Sigmoid colon (tissue), 7 donors: ENCODE measurements at regions of chr9 and their contacts with region 1.

Region 1: DNA sequence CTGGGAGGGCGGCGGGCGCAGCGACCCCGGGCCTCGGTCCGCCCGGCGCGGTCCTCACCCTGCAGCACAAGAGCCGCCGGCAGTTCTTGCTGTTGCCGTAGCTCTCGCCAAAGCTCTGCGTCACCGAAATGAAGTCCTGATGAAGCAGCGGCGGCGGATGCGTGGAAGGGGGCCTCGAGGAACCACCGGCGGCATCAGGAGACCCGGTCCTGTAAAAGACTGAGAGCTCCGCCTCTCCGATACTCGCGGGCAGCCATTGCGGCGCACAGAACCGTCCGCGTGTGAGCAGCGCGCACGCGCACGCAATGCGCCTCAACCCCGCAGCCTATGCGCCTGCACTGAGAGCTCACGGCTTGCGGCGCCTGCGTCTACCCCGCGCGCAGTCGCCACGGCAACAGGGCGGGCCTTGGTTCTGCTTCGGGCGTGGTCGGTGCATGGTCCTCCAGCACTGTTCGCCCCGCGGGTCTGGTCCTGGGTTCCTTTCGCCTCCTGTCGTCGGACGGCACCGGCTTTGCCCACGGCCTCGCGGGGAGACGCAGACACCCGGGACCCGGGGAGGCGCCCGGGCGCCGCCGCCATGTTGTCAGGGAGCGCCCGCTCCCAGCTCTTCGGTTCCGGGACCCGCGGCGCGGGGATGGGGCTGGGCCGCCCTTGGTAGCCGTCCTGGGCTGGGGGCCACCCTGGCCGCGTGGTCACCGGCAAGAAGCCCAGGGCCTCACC is 9.3 kb upstream of the GRIN1 start:
- DNase-seq: peak; percentile 91
- H3K4me3 ChIP-seq: peak overlapping the region; percentile 44 to 79 (median 64)
- H3K27ac ChIP-seq: peak overlapping the region; percentile 61 to 79 (median 67)
- H3K4me1 ChIP-seq: peaks cover 0 to 31% (median 23%) of the 10 kb centered on the region in 4 donors
- H3K27me3 ChIP-seq: peaks cover 0 to 35% (median 0%) of the 10 kb centered on the region in 3 donors
- CTCF ChIP-seq: no peak
- EP300 ChIP-seq: no peak
- POLR2A ChIP-seq: no peak

Region 2: DNA sequence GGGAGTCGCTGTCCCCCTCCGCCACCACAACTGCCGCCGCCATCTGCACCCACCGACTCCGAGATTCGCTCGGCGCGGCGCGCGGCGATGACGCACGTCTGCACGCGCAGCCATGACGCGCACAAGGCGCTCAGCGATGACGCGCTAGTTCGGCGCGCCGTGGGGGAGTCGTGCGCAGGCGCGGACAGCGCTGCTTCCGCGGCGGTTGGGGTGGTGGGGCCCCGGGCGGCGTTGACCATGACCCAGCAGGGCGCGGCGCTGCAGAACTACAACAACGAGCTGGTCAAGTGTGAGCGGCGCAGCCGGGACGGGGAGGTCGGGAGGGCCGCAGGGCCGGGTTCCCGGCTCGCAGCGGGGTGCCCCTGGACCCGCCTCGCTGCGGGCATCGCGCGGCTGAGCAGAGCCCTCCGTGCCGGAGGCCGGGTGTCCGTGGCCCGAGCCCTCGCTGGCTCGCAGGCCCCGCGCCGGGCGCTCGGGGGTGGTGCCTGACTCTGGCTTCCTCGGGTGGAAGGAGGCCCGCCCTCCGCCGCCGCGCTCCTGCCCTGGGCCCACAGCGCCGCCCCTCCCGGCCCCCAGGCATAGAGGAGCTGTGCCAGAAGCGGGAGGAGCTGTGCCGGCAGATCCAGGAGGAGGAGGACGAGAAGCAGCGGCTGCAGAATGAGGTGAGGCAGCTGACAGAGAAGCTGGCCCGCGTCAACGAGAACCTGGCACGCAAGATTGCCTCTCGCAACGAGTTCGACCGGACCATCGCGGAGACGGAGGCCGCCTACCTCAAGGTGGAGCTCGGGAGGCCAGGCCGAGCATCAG is 59.1 kb after region 1 on chr9 and contains the starts of genes ANAPC2 and SSNA1:
- intact Hi-C with region 1: loop called (anchors 5 kb)
- DNase-seq: peak; percentile 96
- H3K4me3 ChIP-seq: peak within 1 kb of the TSS; percentile 62 to 96 (median 72)
- H3K27ac ChIP-seq: peak within 1 kb of the TSS; percentile 95 to 99 (median 97)
- H3K4me1 ChIP-seq: peaks cover 0 to 47% (median 45%) of the 10 kb centered on the region in 4 donors
- H3K27me3 ChIP-seq: no peaks in the 10 kb centered on the region
- CTCF ChIP-seq: no peak
- EP300 ChIP-seq: no peak
- POLR2A ChIP-seq: peak; percentile 70 to 72
- total RNA-seq, gene ANAPC2: 21.0 to 27.4 (median 24.6) TPM
- total RNA-seq, gene SSNA1: 39.6 to 122 (median 76.3) TPM